ENCODE measurements at regions of chr2 and their contacts with region 1.

Region 1: GRCh38 chr2:72745679-72746368 is 80.0 kb downstream of the EXOC6B start:
- DNase-seq: no peak
- ATAC-seq: peak in 2 of 4 donors; percentile 55 to 63
- H3K4me3 ChIP-seq: no peak overlapping the region
- H3K27ac ChIP-seq: peak overlapping the region in 1 of 12 donors; percentile 3
- H3K4me1 ChIP-seq: peaks cover 0 to 42% (median 9%) of the 10 kb centered on the region in 12 donors
- H3K27me3 ChIP-seq: no peaks in the 10 kb centered on the region
- CTCF ChIP-seq: peak; percentile 42 to 79 (median 72)
- POLR2A ChIP-seq: no peak

Region 2: GRCh38 chr2:71923887-71924533 is 821.8 kb before region 1 on chr2:
- intact Hi-C with region 1: loop called in 8 of 10 experiments (anchors 2 to 10 kb)
- DNase-seq: peak in 3 of 5 donors; percentile 53 to 68 (median 59)
- ATAC-seq: peak; percentile 37 to 83 (median 74)
- H3K4me3 ChIP-seq: no peak overlapping the region
- H3K27ac ChIP-seq: no peak overlapping the region
- H3K4me1 ChIP-seq: no peaks in the 10 kb centered on the region
- H3K27me3 ChIP-seq: no peaks in the 10 kb centered on the region
- CTCF ChIP-seq: peak; percentile 77 to 87 (median 84)
- POLR2A ChIP-seq: no peak

Region 3: DNA sequence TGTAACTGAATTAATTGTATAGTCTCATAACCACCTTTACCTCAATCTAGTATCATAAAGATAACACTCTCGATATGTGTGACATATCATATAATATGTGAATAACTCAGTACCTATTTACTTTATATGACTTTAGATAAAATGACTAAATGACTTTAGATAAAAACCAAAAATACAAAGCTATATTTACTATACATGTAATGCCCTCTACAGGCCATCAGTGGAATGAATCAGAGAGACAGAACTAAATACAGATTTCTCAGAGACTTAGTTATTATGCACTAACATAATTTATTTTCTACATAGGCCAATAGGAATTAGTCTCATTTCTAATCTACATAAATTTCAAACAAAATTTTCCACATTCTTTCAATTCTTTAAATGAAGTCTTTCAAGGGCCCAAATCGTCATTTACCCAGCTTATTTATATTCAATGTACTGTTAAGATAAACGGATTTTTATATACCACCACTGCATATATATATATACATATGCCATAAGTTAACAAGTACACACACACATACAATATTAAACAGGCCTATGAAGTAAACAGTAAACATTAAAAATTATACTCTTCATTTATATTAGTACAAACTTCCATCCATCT is 139.9 kb before region 1 on chr2:
- intact Hi-C with region 1: loop called in 1 of 10 experiments (anchors 10 kb)
- DNase-seq: no peak
- ATAC-seq: no peak
- H3K4me3 ChIP-seq: no peak overlapping the region
- H3K27ac ChIP-seq: no peak overlapping the region
- H3K4me1 ChIP-seq: peaks cover 0 to 14% (median 0%) of the 10 kb centered on the region in 12 donors
- H3K27me3 ChIP-seq: no peaks in the 10 kb centered on the region
- CTCF ChIP-seq: peak; percentile 39 to 69 (median 60)
- POLR2A ChIP-seq: no peak

Measured in heart left ventricle (tissue), 16 donors.